Endothelial cell of umbilical vein (primary cell): ENCODE measurements at regions of chr5 and their contacts with region 1.

Region 1: GRCh38 chr5:103218164-103218563 is 40.4 kb upstream of the MACIR start:
- DNase-seq: peak; percentile 81
- H3K4me3 ChIP-seq: no peak overlapping the region
- H3K27ac ChIP-seq: peak overlapping the region; percentile 65
- H3K4me1 ChIP-seq: peaks cover 30% of the 10 kb centered on the region
- H3K27me3 ChIP-seq: no peaks in the 10 kb centered on the region
- CTCF ChIP-seq: no peak
- POLR2A ChIP-seq: no peak

Region 2: GRCh38 chr5:103148213-103148612 is 70.0 kb before region 1 on chr5:
- CTCF ChIA-PET with region 1: no interaction called
- POLR2A ChIA-PET with region 1: no interaction called
- dilution Hi-C with region 1: no loop called
- intact Hi-C with region 1: loop called (anchors 5 kb)
- DNase-seq: no peak
- H3K4me3 ChIP-seq: no peak overlapping the region
- H3K27ac ChIP-seq: no peak overlapping the region
- H3K4me1 ChIP-seq: no peaks in the 10 kb centered on the region
- H3K27me3 ChIP-seq: no peaks in the 10 kb centered on the region
- CTCF ChIP-seq: no peak
- POLR2A ChIP-seq: no peak

Region 3: DNA sequence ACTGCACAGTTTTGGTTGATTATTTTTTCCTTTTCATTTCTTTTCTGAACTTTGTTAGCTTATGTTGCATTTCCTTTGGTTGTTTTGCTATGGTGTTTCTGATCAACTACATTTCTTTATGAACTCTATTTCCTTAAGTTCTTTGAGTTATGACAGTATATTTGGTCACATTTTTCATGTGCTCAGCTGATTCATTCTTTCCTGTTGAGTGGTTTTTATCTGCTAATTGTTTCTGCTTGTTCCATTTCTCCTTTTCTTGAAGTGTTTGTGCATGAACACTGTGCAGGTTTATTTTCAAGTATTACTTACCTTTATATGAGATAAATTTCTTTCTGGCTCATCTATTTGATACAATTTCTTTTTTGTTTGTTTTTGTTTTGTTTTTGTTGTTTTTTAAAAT is 10.5 kb before region 1 on chr5:
- CTCF ChIA-PET with region 1: interaction called, 16 read pairs
- POLR2A ChIA-PET with region 1: no interaction called
- dilution Hi-C with region 1: no loop called
- intact Hi-C with region 1: loop called (anchors 1 kb)
- DNase-seq: peak; percentile 83
- H3K4me3 ChIP-seq: no peak overlapping the region
- H3K27ac ChIP-seq: peak overlapping the region; percentile 36
- H3K4me1 ChIP-seq: peaks cover 27% of the 10 kb centered on the region
- H3K27me3 ChIP-seq: no peaks in the 10 kb centered on the region
- CTCF ChIP-seq: no peak
- POLR2A ChIP-seq: no peak

Region 4: DNA sequence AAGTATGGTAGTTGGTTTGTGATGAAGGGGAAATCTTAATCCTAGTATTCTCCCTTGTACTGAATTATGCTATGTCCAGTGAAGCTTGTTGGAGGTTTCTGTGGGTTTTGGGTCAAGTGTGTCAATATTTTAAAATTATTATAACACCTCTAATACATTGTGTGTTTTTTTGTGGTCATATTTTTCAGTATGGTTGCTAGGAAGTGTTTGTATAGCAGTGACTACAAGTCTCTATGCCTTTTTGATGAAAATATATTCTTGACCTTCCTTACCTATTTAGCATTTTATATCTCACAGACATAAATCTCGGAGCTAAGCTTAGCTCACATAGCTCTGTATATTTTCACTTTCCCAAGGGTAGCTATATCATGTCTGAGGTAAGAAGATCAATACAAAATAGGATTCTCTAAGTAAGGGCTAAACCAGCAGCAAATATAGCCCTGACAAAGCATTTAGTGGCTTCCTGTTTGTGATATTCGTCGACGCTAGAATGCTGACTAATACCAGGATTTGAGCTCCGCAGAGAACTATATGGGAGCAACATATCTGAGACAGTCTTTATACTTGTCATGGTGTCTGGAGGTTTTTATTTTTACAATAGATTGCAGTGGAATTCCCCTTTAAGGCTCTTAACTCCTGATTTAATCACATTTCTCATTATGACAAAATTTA is 122.7 kb after region 1 on chr5:
- CTCF ChIA-PET with region 1: no interaction called
- POLR2A ChIA-PET with region 1: no interaction called
- dilution Hi-C with region 1: no loop called
- intact Hi-C with region 1: no loop called
- DNase-seq: peak; percentile 24
- H3K4me3 ChIP-seq: no peak overlapping the region
- H3K27ac ChIP-seq: no peak overlapping the region
- H3K4me1 ChIP-seq: peaks cover 5% of the 10 kb centered on the region
- H3K27me3 ChIP-seq: no peaks in the 10 kb centered on the region
- CTCF ChIP-seq: no peak
- POLR2A ChIP-seq: no peak